Activated CD4-positive, alpha-beta memory T cell treated with anti-CD3 and anti-CD28 coated beads for 36 hours (primary cell): ENCODE measurements at regions of chr3 and their contacts with region 1.

Region 1: DNA sequence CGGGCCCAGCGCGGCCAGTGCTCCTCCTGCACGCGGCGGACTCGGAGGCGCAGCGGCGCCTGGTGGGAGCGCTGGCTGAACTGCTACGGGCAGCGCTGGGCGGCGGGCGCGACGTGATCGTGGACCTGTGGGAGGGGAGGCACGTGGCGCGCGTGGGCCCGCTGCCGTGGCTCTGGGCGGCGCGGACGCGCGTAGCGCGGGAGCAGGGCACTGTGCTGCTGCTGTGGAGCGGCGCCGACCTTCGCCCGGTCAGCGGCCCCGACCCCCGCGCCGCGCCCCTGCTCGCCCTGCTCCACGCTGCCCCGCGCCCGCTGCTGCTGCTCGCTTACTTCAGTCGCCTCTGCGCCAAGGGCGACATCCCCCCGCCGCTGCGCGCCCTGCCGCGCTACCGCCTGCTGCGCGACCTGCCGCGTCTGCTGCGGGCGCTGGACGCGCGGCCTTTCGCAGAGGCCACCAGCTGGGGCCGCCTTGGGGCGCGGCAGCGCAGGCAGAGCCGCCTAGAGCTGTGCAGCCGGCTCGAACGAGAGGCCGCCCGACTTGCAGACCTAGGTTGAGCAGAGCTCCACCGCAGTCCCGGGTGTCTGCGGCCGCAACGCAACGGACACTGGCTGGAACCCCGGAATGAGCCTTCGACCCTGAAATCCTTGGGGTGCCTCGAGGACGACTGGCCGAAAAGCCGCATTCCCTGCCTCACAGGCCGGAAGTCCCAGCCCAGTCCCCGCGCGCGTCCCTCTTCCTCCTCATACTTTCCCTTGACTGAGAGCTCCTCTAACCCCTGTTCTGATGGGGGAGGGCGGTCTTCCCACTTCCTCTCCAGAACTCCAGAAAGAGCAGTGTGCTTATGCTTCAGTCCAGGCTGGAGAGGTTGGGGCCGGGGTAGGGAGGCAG is 1.4 kb upstream of the IL17RC start:
- DNase-seq: peak; percentile 58
- H3K4me3 Mint-ChIP-seq: peak overlapping the region; percentile 65
- H3K27ac Mint-ChIP-seq: no peak overlapping the region
- H3K4me1 Mint-ChIP-seq: peaks cover 23% of the 10 kb centered on the region
- H3K27me3 Mint-ChIP-seq: peaks cover 2% of the 10 kb centered on the region

Region 2: GRCh38 chr3:9809615-9810432 is 105.7 kb before region 1 on chr3 and contains the start of gene TTLL3:
- CTCF ChIA-PET with region 1: no interaction called
- POLR2A ChIA-PET with region 1: interaction called, 3 read pairs
- intact Hi-C with region 1: loop called (anchors 5 kb)
- DNase-seq: peak; percentile 55
- H3K4me3 Mint-ChIP-seq: peak within 1 kb of the TSS; percentile 81
- H3K27ac Mint-ChIP-seq: peak within 1 kb of the TSS; percentile 83
- H3K4me1 Mint-ChIP-seq: peaks cover 30% of the 10 kb centered on the region
- H3K27me3 Mint-ChIP-seq: no peaks in the 10 kb centered on the region
- total RNA-seq, gene TTLL3: 49.6 to 49.7 TPM

Region 3: GRCh38 chr3:9902372-9903237 is 12.9 kb before region 1 on chr3 and contains the start of gene IL17RE:
- CTCF ChIA-PET with region 1: interaction called, 5 read pairs
- POLR2A ChIA-PET with region 1: interaction called, 3 read pairs
- intact Hi-C with region 1: loop called (anchors 2 kb)
- DNase-seq: no peak
- H3K4me3 Mint-ChIP-seq: peak within 1 kb of the TSS; percentile 44
- H3K27ac Mint-ChIP-seq: peak within 1 kb of the TSS; percentile 78
- H3K4me1 Mint-ChIP-seq: peaks cover 27% of the 10 kb centered on the region
- H3K27me3 Mint-ChIP-seq: no peaks in the 10 kb centered on the region
- total RNA-seq, gene IL17RE: 1.8 to 1.9 TPM